ENCODE measurements at regions of chr9 and their contacts with region 1.

Region 1: GRCh38 chr9:128191406-128192046 is at the start of gene CIZ1:
- DNase-seq: peak; percentile 85
- ATAC-seq: peak; percentile 89
- H3K4me3 Mint-ChIP-seq: peak within 1 kb of the TSS; percentile 94
- H3K27ac Mint-ChIP-seq: peak within 1 kb of the TSS; percentile 92
- H3K4me1 Mint-ChIP-seq: peaks cover 25% of the 10 kb centered on the region
- H3K27me3 Mint-ChIP-seq: no peaks in the 10 kb centered on the region
- CTCF ChIP-seq: no peak
- total RNA-seq, gene CIZ1: 142 and 160 TPM in 2 replicates

Region 2: GRCh38 chr9:128159784-128160602 is 31.5 kb before region 1 on chr9 and contains the start of gene BBLN:
- CTCF ChIA-PET with region 1: interaction called, 3 read pairs
- POLR2A ChIA-PET with region 1: interaction called, 20 read pairs
- intact Hi-C with region 1: loop called (anchors 1 kb)
- DNase-seq: peak; percentile 85
- ATAC-seq: peak; percentile 94
- H3K4me3 Mint-ChIP-seq: peak within 1 kb of the TSS; percentile 81
- H3K27ac Mint-ChIP-seq: peak within 1 kb of the TSS; percentile 81
- H3K4me1 Mint-ChIP-seq: peaks cover 13% of the 10 kb centered on the region
- H3K27me3 Mint-ChIP-seq: no peaks in the 10 kb centered on the region
- CTCF ChIP-seq: no peak
- total RNA-seq, gene BBLN: 47.7 and 53.6 TPM in 2 replicates

Region 3: DNA sequence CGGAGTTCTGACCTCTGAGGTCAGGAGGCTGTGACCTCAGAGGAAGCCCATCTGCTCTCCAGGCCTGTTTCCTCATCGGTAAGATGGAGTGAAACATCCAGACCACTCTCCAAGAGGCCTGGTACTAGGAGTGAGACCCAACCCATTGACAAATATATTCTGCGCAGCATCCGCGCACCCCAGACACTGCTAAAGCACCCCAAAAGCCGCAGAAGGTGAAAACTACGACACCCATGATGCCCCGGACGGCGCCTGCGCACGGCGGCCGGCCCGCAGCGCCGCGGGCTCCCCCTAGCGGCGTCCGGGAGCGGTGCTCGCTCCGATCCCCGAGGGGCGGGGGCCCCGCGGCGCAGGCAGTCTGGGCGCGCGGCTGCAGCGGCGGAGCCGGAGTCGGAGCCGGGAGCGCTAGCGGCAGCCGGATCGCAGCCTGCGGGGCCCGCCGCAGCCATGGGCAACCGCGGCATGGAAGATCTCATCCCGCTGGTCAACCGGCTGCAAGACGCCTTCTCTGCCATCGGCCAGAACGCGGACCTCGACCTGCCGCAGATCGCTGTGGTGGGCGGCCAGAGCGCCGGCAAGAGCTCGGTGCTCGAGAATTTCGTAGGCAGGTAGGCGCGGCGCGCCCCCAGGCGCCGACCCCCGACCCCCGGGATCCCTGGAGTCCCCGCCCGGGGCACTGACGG is 11.6 kb after region 1 on chr9 and contains the start of gene DNM1:
- CTCF ChIA-PET with region 1: interaction called, 7 read pairs
- POLR2A ChIA-PET with region 1: interaction called, 8 read pairs
- intact Hi-C with region 1: loop called (anchors 1 kb)
- DNase-seq: peak; percentile 78
- ATAC-seq: peak; percentile 98
- H3K4me3 Mint-ChIP-seq: peak within 1 kb of the TSS; percentile 85
- H3K27ac Mint-ChIP-seq: peak within 1 kb of the TSS; percentile 56
- H3K4me1 Mint-ChIP-seq: peaks cover 7% of the 10 kb centered on the region
- H3K27me3 Mint-ChIP-seq: peaks cover 18% of the 10 kb centered on the region
- CTCF ChIP-seq: peak; percentile 59
- total RNA-seq, gene DNM1: 0.81 and 0.86 TPM in 2 replicates